ENCODE measurements at regions of chr16 and their contacts with region 1.

Region 1: DNA sequence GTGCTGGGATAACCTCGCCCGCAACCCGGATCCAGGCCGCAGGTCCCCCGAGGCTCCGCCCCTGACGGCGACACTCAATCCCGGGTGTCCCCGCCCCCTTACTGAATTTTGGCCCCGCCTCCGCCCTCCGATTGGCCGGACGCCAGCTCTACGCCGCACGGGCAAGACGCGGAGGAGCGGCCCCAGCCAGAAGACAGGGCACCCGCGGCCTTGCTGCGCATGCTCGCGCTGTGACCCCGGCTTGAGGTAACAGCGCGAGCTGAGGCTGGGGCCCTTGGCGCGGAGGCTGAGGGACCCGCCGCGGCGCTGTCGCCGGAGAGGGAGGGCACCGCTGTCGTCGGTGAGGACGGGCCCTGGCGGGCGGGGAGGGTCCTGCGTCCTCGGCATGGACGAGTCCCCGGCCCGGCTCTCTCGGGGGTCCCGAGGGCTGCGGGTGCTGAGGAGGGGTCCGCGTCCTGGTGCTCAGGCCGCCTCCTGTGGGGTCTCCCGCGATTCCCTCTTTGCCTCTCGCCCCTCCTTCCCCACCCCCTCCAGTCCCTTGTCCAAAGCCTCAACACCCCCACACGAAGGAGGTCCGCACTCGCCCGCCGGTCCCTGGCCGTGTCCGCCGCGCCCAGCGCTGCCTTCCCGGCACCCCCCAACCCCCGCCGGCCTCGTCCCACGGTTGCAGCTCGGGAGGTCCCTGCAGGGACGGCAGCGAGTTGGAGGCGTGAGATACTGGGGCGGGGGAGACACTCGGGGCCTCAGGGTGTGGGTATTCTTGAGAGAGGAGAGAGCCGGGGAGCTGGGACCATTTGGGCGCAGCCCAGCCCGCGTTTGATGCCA is at the start of gene FLYWCH2:
- DNase-seq: peak; percentile 100
- H3K4me3 Mint-ChIP-seq: peak within 1 kb of the TSS; percentile 90
- H3K27ac Mint-ChIP-seq: peak within 1 kb of the TSS; percentile 97
- H3K4me1 Mint-ChIP-seq: peaks cover 11% of the 10 kb centered on the region
- H3K27me3 Mint-ChIP-seq: no peaks in the 10 kb centered on the region
- total RNA-seq, gene FLYWCH2: 19.1 to 19.4 TPM

Region 2: GRCh38 chr16:2398520-2398919 is 484.7 kb before region 1 on chr16:
- CTCF ChIA-PET with region 1: no interaction called
- POLR2A ChIA-PET with region 1: no interaction called
- intact Hi-C with region 1: no loop called
- DNase-seq: no peak
- H3K4me3 Mint-ChIP-seq: no peak overlapping the region
- H3K27ac Mint-ChIP-seq: no peak overlapping the region
- H3K4me1 Mint-ChIP-seq: no peaks in the 10 kb centered on the region
- H3K27me3 Mint-ChIP-seq: no peaks in the 10 kb centered on the region

Region 3: DNA sequence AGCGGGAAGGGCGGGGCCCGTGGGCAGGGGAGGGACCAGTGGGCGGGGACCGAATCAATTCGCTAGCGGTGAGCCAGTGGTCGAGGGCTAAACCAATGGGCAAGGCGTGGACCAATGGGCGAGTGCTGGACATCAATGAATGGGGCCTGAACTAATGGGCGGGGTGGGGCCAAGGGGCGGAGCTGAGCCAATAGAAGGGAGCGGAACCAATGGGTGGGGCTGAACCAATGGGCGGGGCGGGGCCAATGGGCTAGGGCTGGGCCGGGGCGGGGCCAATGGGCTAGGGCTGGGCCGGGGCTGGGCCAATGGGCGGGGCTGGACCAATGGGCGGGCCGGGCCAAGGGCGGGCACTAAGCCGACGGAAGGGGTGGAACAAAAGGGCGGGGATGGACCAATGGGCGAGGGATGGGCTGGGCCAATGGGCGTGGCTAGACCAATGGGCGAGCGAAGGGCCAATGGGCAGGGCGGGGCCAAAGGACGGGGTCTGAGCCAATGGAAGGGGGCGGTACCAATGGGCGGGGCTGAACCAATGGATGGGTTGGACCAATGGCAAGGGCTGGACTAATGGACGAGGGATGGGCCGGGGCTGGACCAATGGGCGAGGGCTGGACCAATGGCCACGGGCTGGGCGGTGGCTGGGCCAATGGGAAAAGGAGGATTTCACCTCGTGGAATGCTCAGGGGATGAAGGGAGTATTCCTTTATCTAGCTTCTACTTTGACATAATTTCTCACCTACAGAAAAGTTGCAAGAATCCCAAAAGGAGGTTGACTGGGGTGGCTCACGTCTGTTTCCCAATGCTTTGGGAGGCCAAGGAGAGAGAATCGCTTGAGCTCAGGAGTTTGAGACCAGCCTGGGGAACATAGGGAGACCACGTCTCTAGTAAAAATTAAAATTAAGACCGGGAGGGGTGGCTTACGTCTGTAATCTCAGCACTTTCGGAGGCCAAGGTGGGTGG is 22.5 kb after region 1 on chr16:
- CTCF ChIA-PET with region 1: interaction called, 11 read pairs
- POLR2A ChIA-PET with region 1: interaction called, 5 read pairs
- intact Hi-C with region 1: loop called (anchors 1 kb)
- DNase-seq: peak; percentile 99
- H3K4me3 Mint-ChIP-seq: peak overlapping the region; percentile 97
- H3K27ac Mint-ChIP-seq: peak overlapping the region; percentile 51
- H3K4me1 Mint-ChIP-seq: peaks cover 16% of the 10 kb centered on the region
- H3K27me3 Mint-ChIP-seq: no peaks in the 10 kb centered on the region

Measured in activated CD4-positive, alpha-beta memory T cell treated with anti-CD3 and anti-CD28 coated beads for 36 hours (primary cell).